H1 (cell line): ENCODE measurements at regions of chr7 and their contacts with region 1.

Region 1: GRCh38 chr7:135710417-135711138 is 17.4 kb downstream of the SLC13A4 start:
- DNase-seq: peak in 1 of 2 experiments; percentile 73
- H3K4me3 ChIP-seq: peak overlapping the region in 1 of 4 experiments; percentile 37; a peak in 1 of 8 replicates
- H3K27ac ChIP-seq: no peak overlapping the region
- H3K4me1 ChIP-seq: peaks cover 0 to 4% (median 2%) of the 10 kb centered on the region in 4 experiments; a peak in 1 of 7 replicates
- H3K27me3 ChIP-seq: no peaks in the 10 kb centered on the region
- CTCF ChIP-seq: peak; percentile 42 to 76 (median 45)
- EP300 ChIP-seq: no peak
- POLR2A ChIP-seq: no peak
- RAD21 ChIP-seq: no peak; a peak in 1 of 4 replicates

Region 2: GRCh38 chr7:135672560-135673359 is 37.8 kb before region 1 on chr7:
- CTCF ChIA-PET with region 1: interaction called, 133 read pairs
- POLR2A ChIA-PET with region 1: no interaction called
- DNase-seq: no peak
- H3K4me3 ChIP-seq: no peak overlapping the region
- H3K27ac ChIP-seq: no peak overlapping the region
- H3K4me1 ChIP-seq: no peaks in the 10 kb centered on the region
- H3K27me3 ChIP-seq: no peaks in the 10 kb centered on the region
- CTCF ChIP-seq: peak in 2 of 3 experiments; percentile 67 to 82; a peak in 3 of 4 replicates
- EP300 ChIP-seq: no peak
- POLR2A ChIP-seq: no peak
- RAD21 ChIP-seq: peak; percentile 71 to 75

Region 3: DNA sequence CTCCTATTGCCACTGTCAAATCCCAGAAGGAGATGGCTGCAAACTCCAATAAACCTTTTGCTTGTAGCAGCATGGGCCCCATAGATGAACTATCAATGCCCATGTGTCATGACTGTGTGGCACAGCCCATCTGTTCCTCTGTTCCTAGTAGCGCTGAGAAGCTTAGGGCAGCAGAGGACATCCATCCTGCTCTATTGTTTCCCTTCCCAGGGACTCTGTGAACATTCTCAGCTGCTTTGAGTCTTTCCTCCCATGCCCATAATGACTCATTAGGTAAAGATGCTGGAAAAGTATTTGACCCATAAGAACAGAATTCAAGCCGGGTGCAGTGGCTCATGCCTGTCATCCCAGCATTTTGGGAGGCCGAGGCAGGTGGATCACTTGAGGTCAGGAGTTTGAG is 20.0 kb before region 1 on chr7:
- CTCF ChIA-PET with region 1: interaction called, 78 read pairs
- POLR2A ChIA-PET with region 1: no interaction called
- DNase-seq: no peak
- H3K4me3 ChIP-seq: no peak overlapping the region
- H3K27ac ChIP-seq: no peak overlapping the region
- H3K4me1 ChIP-seq: no peaks in the 10 kb centered on the region
- H3K27me3 ChIP-seq: no peaks in the 10 kb centered on the region
- CTCF ChIP-seq: no peak
- EP300 ChIP-seq: no peak
- POLR2A ChIP-seq: no peak
- RAD21 ChIP-seq: no peak

Region 4: GRCh38 chr7:135728136-135728669 is 17.6 kb after region 1 on chr7 and contains the start of gene SLC13A4:
- CTCF ChIA-PET with region 1: interaction called, 110 read pairs
- POLR2A ChIA-PET with region 1: interaction called, 3 read pairs
- DNase-seq: peak in 1 of 2 experiments; percentile 77
- H3K4me3 ChIP-seq: peak within 1 kb of the TSS in 3 of 4 experiments; percentile 12 to 38 (median 20); a peak in 4 of 8 replicates
- H3K27ac ChIP-seq: no peak within 1 kb of the TSS
- H3K4me1 ChIP-seq: peaks cover 3 to 6% (median 5%) of the 10 kb centered on the region in 4 experiments; a peak in 5 of 7 replicates
- H3K27me3 ChIP-seq: no peaks in the 10 kb centered on the region
- CTCF ChIP-seq: no peak
- EP300 ChIP-seq: no peak
- POLR2A ChIP-seq: no peak
- RAD21 ChIP-seq: no peak
- total RNA-seq, gene SLC13A4: 3.7 and 3.9 TPM in 2 replicates

Region 5: DNA sequence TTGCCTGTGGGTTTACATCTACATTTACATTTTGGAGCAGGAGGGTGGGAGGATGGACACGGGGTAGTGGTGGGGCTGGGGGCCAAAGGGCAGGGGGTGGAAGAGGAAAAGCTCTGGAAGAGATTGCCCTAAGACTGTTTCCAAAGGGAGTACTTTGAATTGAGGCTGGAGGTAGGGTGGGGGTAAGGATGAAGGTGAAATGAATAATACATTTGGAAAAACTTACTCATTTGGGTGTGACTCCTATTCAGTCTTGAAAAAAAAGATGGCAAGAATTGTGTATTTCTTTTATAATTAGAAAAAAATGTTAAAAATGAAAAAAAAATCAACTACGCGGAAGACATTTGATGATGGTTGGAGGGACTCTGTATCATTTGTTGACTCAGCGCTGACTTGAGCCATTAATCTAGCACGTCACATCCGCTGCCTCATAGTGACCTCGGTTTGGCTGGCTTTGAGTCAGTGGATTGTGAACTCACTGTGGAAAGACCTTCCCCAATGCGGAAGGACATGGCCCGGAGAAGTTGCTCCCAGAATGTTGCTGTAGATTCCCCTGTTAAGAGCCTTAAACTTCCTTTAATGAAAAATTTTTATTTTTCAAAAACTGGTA is 35.2 kb after region 1 on chr7:
- CTCF ChIA-PET with region 1: interaction called, 11 read pairs
- POLR2A ChIA-PET with region 1: no interaction called
- DNase-seq: no peak
- H3K4me3 ChIP-seq: no peak overlapping the region
- H3K27ac ChIP-seq: no peak overlapping the region
- H3K4me1 ChIP-seq: no peaks in the 10 kb centered on the region; a peak in 1 of 7 replicates
- H3K27me3 ChIP-seq: no peaks in the 10 kb centered on the region
- CTCF ChIP-seq: no peak
- EP300 ChIP-seq: no peak
- POLR2A ChIP-seq: no peak
- RAD21 ChIP-seq: no peak

Region 6: GRCh38 chr7:135761751-135762488 is 51.3 kb after region 1 on chr7:
- CTCF ChIA-PET with region 1: interaction called, 12 read pairs
- POLR2A ChIA-PET with region 1: no interaction called
- DNase-seq: no peak
- H3K4me3 ChIP-seq: no peak overlapping the region
- H3K27ac ChIP-seq: no peak overlapping the region
- H3K4me1 ChIP-seq: peaks cover 0 to 2% (median 1%) of the 10 kb centered on the region in 4 experiments; a peak in 3 of 7 replicates
- H3K27me3 ChIP-seq: no peaks in the 10 kb centered on the region
- CTCF ChIP-seq: no peak
- EP300 ChIP-seq: no peak
- POLR2A ChIP-seq: no peak
- RAD21 ChIP-seq: no peak

Region 7: DNA sequence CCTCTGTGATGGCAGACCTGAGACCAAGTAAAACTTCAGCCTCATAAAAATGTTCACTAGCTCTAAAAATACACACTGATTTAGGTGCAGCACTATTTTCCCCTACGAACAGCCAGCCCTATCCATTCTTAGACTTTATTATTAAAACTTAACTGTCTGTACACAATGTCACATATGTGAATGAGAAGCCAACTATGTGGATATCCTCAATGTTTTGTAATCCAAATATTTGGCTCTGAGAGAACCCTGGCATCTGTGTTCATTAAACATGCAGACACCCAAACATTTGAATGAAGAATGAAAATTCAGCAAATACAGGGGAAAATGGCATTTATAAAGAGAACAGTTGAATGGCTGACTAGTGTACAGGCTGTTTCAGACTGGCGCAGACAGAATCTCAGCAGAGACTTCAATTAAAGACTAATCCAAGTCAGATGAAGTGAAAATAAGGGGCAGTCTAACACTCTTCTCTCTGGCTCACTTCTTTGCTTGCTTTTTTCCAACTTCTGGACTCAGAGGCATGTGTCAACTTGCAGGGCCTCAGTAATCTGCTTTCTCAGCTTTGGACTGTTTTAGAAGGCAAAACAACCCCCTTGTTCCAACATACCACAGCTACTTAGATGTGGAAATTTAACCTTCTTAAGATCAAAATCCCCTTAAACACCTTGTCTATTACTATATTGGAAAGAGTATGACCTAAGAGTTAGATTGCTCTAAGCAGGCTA is 85.4 kb after region 1 on chr7:
- CTCF ChIA-PET with region 1: interaction called, 24 read pairs
- POLR2A ChIA-PET with region 1: no interaction called
- DNase-seq: no peak
- H3K4me3 ChIP-seq: no peak overlapping the region
- H3K27ac ChIP-seq: no peak overlapping the region
- H3K4me1 ChIP-seq: peaks cover 0 to 2% (median 2%) of the 10 kb centered on the region in 4 experiments; a peak in 3 of 7 replicates
- H3K27me3 ChIP-seq: no peaks in the 10 kb centered on the region; a peak in 1 of 7 replicates
- CTCF ChIP-seq: no peak
- EP300 ChIP-seq: no peak
- POLR2A ChIP-seq: no peak
- RAD21 ChIP-seq: no peak

Region 8: GRCh38 chr7:135977007-135977741 is 266.6 kb after region 1 on chr7 and contains the start of gene MTPN:
- CTCF ChIA-PET with region 1: no interaction called
- POLR2A ChIA-PET with region 1: no interaction called
- DNase-seq: peak; percentile 92 to 97
- H3K4me3 ChIP-seq: peak within 1 kb of the TSS; percentile 81 to 95 (median 87)
- H3K27ac ChIP-seq: peak within 1 kb of the TSS; percentile 35; the same call in 1 of the 2 replicates
- H3K4me1 ChIP-seq: peaks cover 0 to 8% (median 2%) of the 10 kb centered on the region in 4 experiments; a peak in 3 of 7 replicates
- H3K27me3 ChIP-seq: no peaks in the 10 kb centered on the region
- CTCF ChIP-seq: no peak
- EP300 ChIP-seq: no peak
- POLR2A ChIP-seq: peak in 1 of 2 experiments; percentile 46; a peak in 1 of 3 replicates
- RAD21 ChIP-seq: no peak
- total RNA-seq, gene MTPN: 101 and 107 TPM in 2 replicates